ENCODE measurements at regions of chr3 and their contacts with region 1.

Region 1: GRCh38 chr3:133943639-133944141 is 48.0 kb upstream of the RAB6B start:
- DNase-seq: no peak
- H3K4me3 Mint-ChIP-seq: no peak overlapping the region
- H3K27ac Mint-ChIP-seq: no peak overlapping the region
- H3K4me1 Mint-ChIP-seq: peaks cover 14% of the 10 kb centered on the region
- H3K27me3 Mint-ChIP-seq: peaks cover 6% of the 10 kb centered on the region

Region 2: GRCh38 chr3:134029734-134030378 is 86.2 kb after region 1 on chr3 and contains the start of gene SLCO2A1:
- CTCF ChIA-PET with region 1: no interaction called
- intact Hi-C with region 1: loop called (anchors 5 kb)
- DNase-seq: peak; percentile 28
- H3K4me3 Mint-ChIP-seq: peak within 1 kb of the TSS; percentile 63
- H3K27ac Mint-ChIP-seq: no peak within 1 kb of the TSS
- H3K4me1 Mint-ChIP-seq: peaks cover 8% of the 10 kb centered on the region
- H3K27me3 Mint-ChIP-seq: peaks cover 39% of the 10 kb centered on the region
- total RNA-seq, gene SLCO2A1: not detected

Measured in activated naive CD4-positive, alpha-beta T cell treated with anti-CD3 and anti-CD28 coated beads for 36 hours (primary cell).